ENCODE measurements at regions of chr11 and their contacts with region 1.

Region 1: DNA sequence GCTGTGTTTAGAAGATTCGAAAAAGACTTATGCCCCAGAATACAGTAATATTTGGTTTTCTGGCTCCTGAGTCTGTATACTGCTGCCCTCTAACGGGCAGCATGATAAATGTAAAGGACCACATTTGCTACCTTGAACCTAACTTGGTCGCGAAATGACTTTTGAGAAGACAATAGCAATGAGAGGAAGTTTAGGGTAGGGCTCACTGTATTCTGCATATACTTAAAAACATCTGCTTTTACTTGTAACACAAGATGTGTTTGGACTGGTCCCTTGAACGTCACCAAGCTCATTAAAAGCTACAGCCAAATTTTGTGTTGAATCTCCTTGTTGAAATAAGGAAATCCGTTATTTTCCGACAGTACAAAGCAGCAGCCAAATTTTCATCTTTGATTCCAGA is 309.1 kb downstream of the SWAP70 start:
- DNase-seq: no peak
- ATAC-seq: peak; percentile 55 to 83 (median 68)
- H3K4me3 ChIP-seq: no peak overlapping the region
- H3K27ac ChIP-seq: no peak overlapping the region
- H3K4me1 ChIP-seq: peaks cover 0 to 21% (median 9%) of the 10 kb centered on the region in 12 donors
- H3K27me3 ChIP-seq: no peaks in the 10 kb centered on the region
- CTCF ChIP-seq: peak; percentile 50 to 83 (median 70)
- POLR2A ChIP-seq: no peak

Region 2: GRCh38 chr11:9861860-9862725 is 110.9 kb before region 1 on chr11:
- intact Hi-C with region 1: loop called in 8 of 10 experiments (anchors 5 to 10 kb)
- DNase-seq: peak in 4 of 5 donors; percentile 31 to 48 (median 38)
- ATAC-seq: peak in 3 of 4 donors; percentile 82 to 85 (median 84)
- H3K4me3 ChIP-seq: no peak overlapping the region
- H3K27ac ChIP-seq: no peak overlapping the region
- H3K4me1 ChIP-seq: peaks cover 0 to 17% (median 5%) of the 10 kb centered on the region in 12 donors
- H3K27me3 ChIP-seq: no peaks in the 10 kb centered on the region
- CTCF ChIP-seq: peak; percentile 54 to 79 (median 64)
- POLR2A ChIP-seq: no peak

Region 3: GRCh38 chr11:10348650-10349285 is 375.8 kb after region 1 on chr11:
- intact Hi-C with region 1: no loop called
- DNase-seq: no peak
- ATAC-seq: peak in 1 of 4 donors; percentile 38
- H3K4me3 ChIP-seq: no peak overlapping the region
- H3K27ac ChIP-seq: no peak overlapping the region
- H3K4me1 ChIP-seq: peaks cover 8 to 35% (median 23%) of the 10 kb centered on the region in 12 donors
- H3K27me3 ChIP-seq: no peaks in the 10 kb centered on the region
- CTCF ChIP-seq: no peak
- POLR2A ChIP-seq: no peak

Measured in heart left ventricle (tissue), 16 donors.